ENCODE measurements at regions of chr12 and their contacts with region 1.

Region 1: GRCh38 chr12:17853054-17853453 is 236.9 kb downstream of the RERGL start:
- DNase-seq: no peak
- ATAC-seq: no peak
- H3K4me3 ChIP-seq: no peak overlapping the region
- H3K4me3 Mint-ChIP-seq: no peak overlapping the region
- H3K27ac ChIP-seq: no peak overlapping the region
- H3K27ac Mint-ChIP-seq: no peak overlapping the region
- H3K4me1 ChIP-seq: no peaks in the 10 kb centered on the region
- H3K4me1 Mint-ChIP-seq: no peaks in the 10 kb centered on the region
- H3K27me3 ChIP-seq: no peaks in the 10 kb centered on the region
- H3K27me3 Mint-ChIP-seq: no peaks in the 10 kb centered on the region
- CTCF ChIP-seq: no peak

Region 2: GRCh38 chr12:17763366-17763765 is 89.7 kb before region 1 on chr12:
- CTCF ChIA-PET with region 1: no interaction called
- POLR2A ChIA-PET with region 1: no interaction called
- intact Hi-C with region 1: loop called (anchors 2 kb)
- DNase-seq: no peak
- ATAC-seq: no peak
- H3K4me3 ChIP-seq: no peak overlapping the region
- H3K4me3 Mint-ChIP-seq: no peak overlapping the region
- H3K27ac ChIP-seq: no peak overlapping the region
- H3K27ac Mint-ChIP-seq: no peak overlapping the region
- H3K4me1 ChIP-seq: no peaks in the 10 kb centered on the region
- H3K4me1 Mint-ChIP-seq: no peaks in the 10 kb centered on the region
- H3K27me3 ChIP-seq: no peaks in the 10 kb centered on the region
- H3K27me3 Mint-ChIP-seq: no peaks in the 10 kb centered on the region
- CTCF ChIP-seq: no peak

Measured in CD4-positive, alpha-beta T cell (primary cell).